ENCODE measurements at regions of chr11 and their contacts with region 1.

Region 1: DNA sequence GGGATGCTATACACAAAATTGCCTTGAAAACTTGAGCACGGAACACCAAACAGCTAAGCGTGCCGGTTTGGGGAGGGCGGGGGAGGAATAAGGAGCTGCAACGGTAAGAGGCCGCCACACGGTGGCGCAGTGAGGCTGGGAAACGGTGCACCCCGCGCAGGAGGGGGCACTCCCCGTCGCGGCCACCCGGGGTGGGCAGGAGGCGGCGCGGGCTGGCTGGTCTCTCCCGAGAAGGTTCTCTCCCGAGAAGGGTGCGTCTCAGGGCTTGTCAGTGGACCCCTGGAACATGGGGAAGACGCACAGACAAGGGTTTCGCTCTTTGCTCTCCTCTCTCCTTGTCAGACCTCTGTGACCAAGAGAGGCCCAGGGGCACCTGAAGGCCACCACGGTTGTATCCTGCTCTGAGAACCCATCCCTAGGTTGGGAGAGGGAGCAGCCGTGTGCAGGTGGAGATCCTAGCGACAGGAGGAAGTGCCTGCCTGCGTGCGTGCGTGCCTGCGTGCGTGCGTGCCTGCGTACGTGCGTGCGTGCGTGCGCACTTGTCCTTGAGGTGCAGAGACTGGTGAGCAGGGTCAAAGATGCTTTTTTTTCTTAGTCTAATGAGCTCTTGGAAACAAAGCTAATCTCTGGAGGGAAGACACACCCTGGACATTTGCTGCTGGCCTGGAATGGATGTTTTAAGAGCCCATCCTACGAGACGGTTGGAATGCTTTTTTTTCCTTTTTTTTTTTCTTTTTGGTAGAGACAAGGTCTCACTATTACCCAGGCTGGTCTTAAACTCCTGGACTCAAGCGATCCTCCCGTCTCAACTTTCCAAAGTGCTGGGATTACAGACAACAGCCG is 18.1 kb upstream of the JAM3 start:
- DNase-seq: no peak
- H3K4me3 ChIP-seq: peak overlapping the region; percentile 49
- CTCF ChIP-seq: peak; percentile 95

Region 2: GRCh38 chr11:134037046-134037908 is 13.5 kb before region 1 on chr11:
- CTCF ChIA-PET with region 1: interaction called, 85 read pairs
- POLR2A ChIA-PET with region 1: no interaction called
- DNase-seq: no peak
- H3K4me3 ChIP-seq: peak overlapping the region; percentile 62
- CTCF ChIP-seq: no peak

Region 3: GRCh38 chr11:134068829-134069425 is 18.2 kb after region 1 on chr11 and contains the start of gene JAM3:
- CTCF ChIA-PET with region 1: interaction called, 98 read pairs
- POLR2A ChIA-PET with region 1: interaction called, 4 read pairs
- DNase-seq: peak; percentile 52
- H3K4me3 ChIP-seq: peak within 1 kb of the TSS; percentile 92
- CTCF ChIP-seq: no peak

Region 4: GRCh38 chr11:134124660-134125451 is 74.1 kb after region 1 on chr11:
- CTCF ChIA-PET with region 1: interaction called, 13 read pairs
- POLR2A ChIA-PET with region 1: no interaction called
- DNase-seq: no peak
- H3K4me3 ChIP-seq: peak overlapping the region; percentile 52
- CTCF ChIP-seq: no peak

Region 5: GRCh38 chr11:134139873-134140331 is 89.1 kb after region 1 on chr11:
- CTCF ChIA-PET with region 1: interaction called, 219 read pairs
- POLR2A ChIA-PET with region 1: no interaction called
- DNase-seq: no peak
- H3K4me3 ChIP-seq: no peak overlapping the region
- CTCF ChIP-seq: peak; percentile 77

Region 6: GRCh38 chr11:134223836-134224709 is 173.3 kb after region 1 on chr11 and contains the starts of genes NCAPD3 and VPS26B:
- CTCF ChIA-PET with region 1: interaction called, 15 read pairs
- POLR2A ChIA-PET with region 1: no interaction called
- DNase-seq: peak; percentile 50
- H3K4me3 ChIP-seq: peak within 1 kb of the TSS; percentile 67
- CTCF ChIP-seq: no peak